Spleen (tissue), 13 donors: ENCODE measurements at regions of chr11 and their contacts with region 1.

Region 1: GRCh38 chr11:76810151-76810853 is 27.1 kb downstream of the TSKU start:
- DNase-seq: peak; percentile 65
- H3K4me3 ChIP-seq: no peak overlapping the region
- H3K27ac ChIP-seq: peak overlapping the region in 4 of 8 donors; percentile 46 to 63 (median 52)
- H3K4me1 ChIP-seq: peaks cover 0 to 23% (median 14%) of the 10 kb centered on the region in 6 donors
- H3K27me3 ChIP-seq: peaks cover 0 to 19% (median 0%) of the 10 kb centered on the region in 7 donors
- CTCF ChIP-seq: peak in 10 of 11 experiments; percentile 25 to 77 (median 62)
- POLR2A ChIP-seq: no peak

Region 2: GRCh38 chr11:76850815-76851214 is 40.5 kb after region 1 on chr11:
- intact Hi-C with region 1: no loop called
- DNase-seq: no peak
- H3K4me3 ChIP-seq: no peak overlapping the region
- H3K27ac ChIP-seq: no peak overlapping the region
- H3K4me1 ChIP-seq: peaks cover 0 to 17% (median 3%) of the 10 kb centered on the region in 6 donors
- H3K27me3 ChIP-seq: no peaks in the 10 kb centered on the region
- CTCF ChIP-seq: no peak
- POLR2A ChIP-seq: no peak

Region 3: GRCh38 chr11:76919887-76920746 is 109.8 kb after region 1 on chr11:
- intact Hi-C with region 1: loop called (anchors 5 kb)
- DNase-seq: peak; percentile 75
- H3K4me3 ChIP-seq: peak overlapping the region in 5 of 8 donors; percentile 9 to 54 (median 17)
- H3K27ac ChIP-seq: peak overlapping the region in 2 of 8 donors; percentile 27 to 44
- H3K4me1 ChIP-seq: peaks cover 0 to 22% (median 17%) of the 10 kb centered on the region in 6 donors
- H3K27me3 ChIP-seq: no peaks in the 10 kb centered on the region
- CTCF ChIP-seq: peak; percentile 51 to 84 (median 73)
- POLR2A ChIP-seq: no peak